ENCODE measurements at regions of chr6 and their contacts with region 1.

Region 1: DNA sequence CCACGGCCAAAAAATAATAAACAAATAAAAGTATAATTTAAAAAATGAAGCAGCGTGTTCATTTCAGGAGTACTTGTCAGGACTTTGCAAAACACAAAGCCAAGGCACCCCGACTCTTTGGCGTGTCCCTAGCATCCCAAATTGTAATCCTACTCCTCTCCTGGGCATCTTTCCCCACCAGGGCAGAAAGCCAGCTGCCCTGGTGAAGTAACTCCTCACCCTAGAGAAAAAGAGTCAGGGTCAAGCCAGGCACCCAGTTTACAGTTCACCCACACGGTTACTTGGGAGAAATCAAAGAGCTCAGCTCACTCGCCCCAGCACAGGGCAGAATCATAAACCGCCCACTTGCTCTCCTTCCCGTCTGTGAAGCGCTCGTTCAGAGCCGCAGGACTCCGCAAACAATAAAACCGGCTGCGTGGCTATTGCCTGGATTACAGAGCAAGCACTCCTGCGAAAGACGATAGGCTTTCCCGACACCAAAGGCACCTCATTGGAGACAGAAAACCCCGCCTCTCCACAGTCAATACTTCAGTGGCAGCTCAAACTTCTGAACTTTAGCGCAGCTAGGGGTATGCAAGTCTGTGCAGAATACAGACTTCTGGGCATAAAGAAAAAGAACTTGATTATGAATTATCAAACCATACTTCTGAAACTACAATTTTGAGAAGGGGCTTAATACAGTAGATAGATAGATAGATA is 73.0 kb upstream of the NHSL1 start:
- DNase-seq: no peak
- H3K4me3 ChIP-seq: no peak overlapping the region
- H3K27ac ChIP-seq: no peak overlapping the region
- H3K4me1 ChIP-seq: no peaks in the 10 kb centered on the region
- CTCF ChIP-seq: no peak

Region 2: DNA sequence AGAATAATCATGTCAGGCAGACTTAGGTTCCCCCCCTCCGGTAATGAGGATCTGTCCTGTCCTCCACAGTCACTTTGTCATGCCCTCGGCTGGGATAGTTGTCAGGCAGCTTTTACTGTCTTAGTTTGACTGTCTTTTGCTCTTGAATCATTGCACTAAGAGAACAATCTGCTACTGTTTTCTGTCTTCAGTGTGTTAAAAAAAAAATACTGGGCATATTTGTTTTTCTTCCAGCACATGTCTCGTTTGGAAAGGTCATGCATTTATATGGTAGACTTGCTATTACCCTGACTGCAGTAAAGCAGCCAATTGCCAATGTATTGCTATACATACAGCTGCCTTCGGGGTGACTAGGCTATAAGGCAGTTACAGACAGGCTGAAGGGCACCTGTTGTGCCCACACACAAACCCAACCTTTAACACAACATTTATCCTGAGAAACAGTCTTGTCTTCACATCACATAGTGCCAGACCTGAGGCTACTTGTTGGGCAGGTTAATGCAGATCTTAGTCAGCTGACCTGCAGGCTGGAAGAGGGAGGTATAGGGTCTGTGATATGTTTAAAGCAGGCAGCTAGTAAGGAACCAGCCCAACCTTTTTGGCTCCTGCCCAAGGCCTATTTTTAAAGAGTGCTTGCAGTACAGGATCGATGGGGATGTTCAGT is 383.9 kb before region 1 on chr6:
- CTCF ChIA-PET with region 1: no interaction called
- POLR2A ChIA-PET with region 1: interaction called, 12 read pairs
- intact Hi-C with region 1: no loop called
- DNase-seq: no peak
- H3K4me3 ChIP-seq: no peak overlapping the region
- H3K27ac ChIP-seq: no peak overlapping the region
- H3K4me1 ChIP-seq: no peaks in the 10 kb centered on the region
- CTCF ChIP-seq: no peak